AG04450 (cell line): ENCODE measurements at regions of chr2 and their contacts with region 1.

Region 1: DNA sequence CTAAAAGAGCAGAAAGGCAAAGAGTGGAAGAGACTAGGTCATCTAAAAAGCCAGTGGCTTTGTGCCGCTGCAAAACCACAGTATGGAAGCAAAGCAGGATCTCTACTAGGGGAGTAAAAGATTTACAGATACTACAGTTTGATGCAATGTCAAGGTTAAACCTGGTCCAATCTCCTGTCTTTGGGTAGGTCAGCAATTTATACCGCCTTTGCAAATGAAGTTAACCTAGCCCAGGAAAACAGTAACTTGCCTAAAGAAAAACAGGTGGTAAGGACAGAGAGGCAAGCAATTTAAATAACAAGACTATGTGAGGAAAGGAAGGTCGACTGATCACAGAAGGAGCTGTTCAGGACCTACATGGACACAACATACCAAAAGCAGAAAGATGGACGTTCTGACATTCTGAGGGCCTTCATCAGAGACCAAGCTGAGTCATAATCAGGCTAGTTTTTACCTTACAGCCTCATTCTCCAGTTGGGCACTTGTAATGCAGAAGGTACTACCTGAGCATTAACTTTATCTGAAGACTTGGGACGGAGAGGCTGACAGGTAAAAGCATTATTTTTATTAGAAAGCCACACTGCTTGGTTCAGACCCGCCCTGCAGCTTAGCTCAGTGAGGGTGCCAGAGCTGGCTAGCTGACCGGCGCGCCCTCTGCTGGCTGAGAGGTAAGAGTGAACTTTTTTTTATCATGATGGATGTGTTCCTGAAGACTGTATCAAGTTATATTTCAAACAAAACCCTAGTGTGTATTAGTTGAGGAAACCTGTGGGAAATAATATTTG is 15.9 kb downstream of the CDKL4 start:
- DNase-seq: peak; percentile 29
- H3K4me3 ChIP-seq: no peak overlapping the region
- H3K27ac ChIP-seq: no peak overlapping the region
- H3K27me3 ChIP-seq: no peaks in the 10 kb centered on the region
- CTCF ChIP-seq: peak; percentile 93

Region 2: GRCh38 chr2:39059366-39059952 is 168.4 kb before region 1 on chr2:
- CTCF ChIA-PET with region 1: interaction called, 342 read pairs
- POLR2A ChIA-PET with region 1: no interaction called
- DNase-seq: peak; percentile 18
- H3K4me3 ChIP-seq: no peak overlapping the region
- H3K27ac ChIP-seq: no peak overlapping the region
- H3K27me3 ChIP-seq: no peaks in the 10 kb centered on the region
- CTCF ChIP-seq: peak; percentile 61

Region 3: DNA sequence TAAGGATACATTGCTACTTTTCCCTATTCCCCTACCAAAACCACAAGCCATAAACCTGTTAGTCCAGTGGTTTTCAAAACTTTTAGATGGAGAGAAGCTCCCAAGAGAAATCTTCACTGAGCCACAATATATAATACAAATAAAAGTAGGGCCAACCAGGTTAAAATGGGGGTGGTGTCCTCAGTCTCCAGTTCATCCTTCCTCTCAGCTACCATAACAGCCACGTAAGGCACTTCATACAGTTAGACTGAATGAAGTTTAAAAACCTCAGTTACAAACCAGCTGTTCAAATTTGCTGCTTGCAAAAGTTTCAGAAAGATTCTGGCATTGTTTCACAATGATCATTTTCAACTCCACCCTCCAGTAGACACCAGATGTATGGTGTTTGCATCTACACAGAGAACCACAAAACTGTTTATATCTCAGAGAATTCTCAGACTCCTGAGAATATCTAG is 132.9 kb before region 1 on chr2:
- CTCF ChIA-PET with region 1: interaction called, 14 read pairs
- POLR2A ChIA-PET with region 1: no interaction called
- DNase-seq: peak; percentile 73
- H3K4me3 ChIP-seq: no peak overlapping the region
- H3K27ac ChIP-seq: no peak overlapping the region
- H3K27me3 ChIP-seq: no peaks in the 10 kb centered on the region
- CTCF ChIP-seq: no peak

Region 4: DNA sequence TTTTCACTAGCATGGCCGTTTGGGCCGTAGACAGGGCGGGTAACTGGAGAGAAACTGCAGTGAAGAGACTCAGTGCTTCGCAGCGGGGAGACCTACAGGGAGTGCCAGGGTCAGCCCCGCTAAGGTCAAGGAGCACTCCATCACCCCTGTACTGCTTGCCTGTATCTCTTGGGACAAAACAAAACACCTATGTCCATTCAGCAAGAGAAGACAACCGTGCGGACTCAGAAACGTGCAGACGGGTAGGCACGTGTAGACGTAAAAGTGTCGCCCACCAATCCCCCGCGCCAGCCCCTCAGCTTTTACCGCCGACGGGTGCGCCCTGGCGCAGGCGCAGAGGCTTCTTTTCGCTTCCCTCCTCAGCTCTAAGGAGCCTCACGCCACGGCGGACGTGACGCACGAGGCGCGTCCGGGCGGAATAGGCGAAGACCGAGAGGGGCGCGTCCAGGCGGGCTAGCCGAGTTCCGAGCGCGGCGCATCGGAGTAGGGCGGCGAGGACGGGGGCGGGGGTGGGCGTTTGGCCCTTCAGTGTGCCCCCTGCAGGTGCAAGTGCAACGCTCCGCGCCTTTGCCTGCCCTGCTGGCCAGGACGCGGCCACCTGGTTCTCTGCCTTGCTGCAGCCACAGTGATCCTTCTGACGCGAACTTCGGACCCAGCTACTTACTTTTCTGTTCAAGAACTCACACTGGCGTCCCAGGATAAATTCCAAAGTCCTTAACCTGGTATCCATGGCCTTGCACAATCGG is 103.6 kb before region 1 on chr2:
- CTCF ChIA-PET with region 1: interaction called, 33 read pairs
- POLR2A ChIA-PET with region 1: interaction called, 7 read pairs
- DNase-seq: peak; percentile 86
- H3K4me3 ChIP-seq: peak overlapping the region; percentile 87
- H3K27ac ChIP-seq: peak overlapping the region; percentile 82
- H3K27me3 ChIP-seq: no peaks in the 10 kb centered on the region
- CTCF ChIP-seq: peak; percentile 52

Region 5: DNA sequence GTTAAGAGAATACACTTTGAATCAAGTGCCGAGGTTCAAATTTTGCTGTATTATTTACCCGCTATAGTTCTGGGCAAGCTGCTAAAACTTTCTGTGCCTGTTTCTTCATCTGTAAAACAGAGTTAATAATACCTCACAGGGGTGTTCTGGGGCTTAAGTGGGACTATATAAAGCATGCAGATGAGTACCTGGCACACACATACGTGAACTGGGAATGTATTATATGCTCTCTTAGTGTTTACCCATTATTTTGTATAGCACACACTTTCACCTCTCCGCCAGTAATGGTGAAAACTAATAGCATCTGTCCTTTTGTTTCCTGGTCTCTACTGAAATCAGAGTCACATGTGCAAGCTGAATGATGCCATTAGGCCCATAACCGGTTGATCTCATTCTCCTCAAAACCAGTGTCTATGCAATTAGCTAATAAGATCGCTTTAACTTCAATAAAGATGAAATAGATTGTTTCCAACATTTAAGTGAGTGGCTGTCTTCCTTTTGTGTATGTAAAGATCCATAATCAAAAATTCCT is 19.8 kb after region 1 on chr2:
- CTCF ChIA-PET with region 1: no interaction called
- POLR2A ChIA-PET with region 1: no interaction called
- DNase-seq: no peak
- H3K4me3 ChIP-seq: no peak overlapping the region
- H3K27ac ChIP-seq: no peak overlapping the region
- H3K27me3 ChIP-seq: no peaks in the 10 kb centered on the region
- CTCF ChIP-seq: no peak

Region 6: GRCh38 chr2:40087434-40087833 is 859.6 kb after region 1 on chr2:
- CTCF ChIA-PET with region 1: no interaction called
- POLR2A ChIA-PET with region 1: no interaction called
- DNase-seq: no peak
- H3K4me3 ChIP-seq: no peak overlapping the region
- H3K27ac ChIP-seq: no peak overlapping the region
- H3K27me3 ChIP-seq: no peaks in the 10 kb centered on the region
- CTCF ChIP-seq: no peak